Activated T-helper 1 cell treated with anti-CD3 and anti-CD28 coated beads, Interleukin-12 subunit alpha, Interleukin-12 subunit beta, Interleukin-2, Interleukin-4 antibody, amounts not matched to agents 30 ng/mL and 10 ng/mL and 1 ng/mL, durations not matched to agents 14 hours and 24 hours and 36 hours (primary cell): ENCODE measurements at regions of chr10 and their contacts with region 1.

Region 1: GRCh38 chr10:71737001-71737833 is 17.6 kb upstream of the C10orf105 start:
- DNase-seq: no peak
- H3K4me3 Mint-ChIP-seq: peak overlapping the region; percentile 16
- H3K27ac Mint-ChIP-seq: peak overlapping the region; percentile 94
- H3K4me1 Mint-ChIP-seq: peaks cover 85% of the 10 kb centered on the region
- H3K27me3 Mint-ChIP-seq: no peaks in the 10 kb centered on the region

Region 2: GRCh38 chr10:71719042-71719441 is 18.2 kb before region 1 on chr10:
- intact Hi-C with region 1: no loop called
- DNase-seq: no peak
- H3K4me3 Mint-ChIP-seq: no peak overlapping the region
- H3K27ac Mint-ChIP-seq: no peak overlapping the region
- H3K4me1 Mint-ChIP-seq: peaks cover 33% of the 10 kb centered on the region
- H3K27me3 Mint-ChIP-seq: no peaks in the 10 kb centered on the region

Region 3: DNA sequence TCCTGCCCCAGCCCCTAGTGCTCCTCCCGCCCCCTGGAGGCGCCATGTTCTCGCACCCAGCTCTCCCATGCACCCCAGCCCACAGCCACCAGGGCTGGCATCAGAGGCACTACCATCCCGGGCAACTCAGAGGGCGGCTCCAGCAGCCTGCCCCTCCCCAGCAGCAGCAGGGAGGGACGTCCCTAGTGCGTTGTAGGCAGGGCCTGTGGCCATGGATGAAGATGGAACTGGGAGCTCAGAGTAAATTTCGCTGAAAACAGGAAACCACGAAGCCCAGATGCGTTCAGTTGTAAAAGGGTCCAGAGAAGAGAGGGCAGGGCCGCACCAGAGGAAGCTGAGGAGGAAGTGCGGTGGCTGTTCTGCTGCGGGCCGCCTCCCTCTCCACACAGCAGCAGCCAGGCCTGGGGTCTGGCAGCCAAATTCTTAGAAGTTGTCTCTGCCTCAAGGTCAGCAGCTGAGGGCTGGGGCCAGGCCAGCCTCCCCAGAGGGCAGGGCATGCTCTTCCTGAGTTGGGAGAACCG is 11.5 kb after region 1 on chr10:
- intact Hi-C with region 1: loop called (anchors 1 kb)
- DNase-seq: peak; percentile 79
- H3K4me3 Mint-ChIP-seq: peak overlapping the region; percentile 76
- H3K27ac Mint-ChIP-seq: peak overlapping the region; percentile 99
- H3K4me1 Mint-ChIP-seq: peaks cover 95% of the 10 kb centered on the region
- H3K27me3 Mint-ChIP-seq: no peaks in the 10 kb centered on the region